K562 (cell line): ENCODE measurements at regions of chr3 and their contacts with region 1.

Region 1: GRCh38 chr3:138068579-138069174 is 46.7 kb downstream of the DZIP1L start:
- DNase-seq: peak; percentile 74 to 82 (median 80)
- ATAC-seq: peak; percentile 98
- H3K4me3 ChIP-seq: no peak overlapping the region
- H3K27ac ChIP-seq: no peak overlapping the region
- H3K4me1 ChIP-seq: no peaks in the 10 kb centered on the region
- H3K27me3 ChIP-seq: peaks cover 0 to 30% of the 10 kb centered on the region in 2 experiments; a peak in 2 of 5 replicates
- CTCF ChIP-seq: peak; percentile 86 to 91 (median 88)
- EP300 ChIP-seq: no peak
- POLR2A ChIP-seq: no peak
- RAD21 ChIP-seq: peak; percentile 93 to 94

Region 2: GRCh38 chr3:137669519-137670060 is 399.1 kb before region 1 on chr3:
- CTCF ChIA-PET with region 1: no interaction called
- POLR2A ChIA-PET with region 1: no interaction called
- in situ Hi-C with region 1: no loop called
- intact Hi-C with region 1: no loop called
- DNase-seq: no peak
- ATAC-seq: no peak
- H3K4me3 ChIP-seq: no peak overlapping the region
- H3K27ac ChIP-seq: no peak overlapping the region
- H3K4me1 ChIP-seq: no peaks in the 10 kb centered on the region
- H3K27me3 ChIP-seq: no peaks in the 10 kb centered on the region
- CTCF ChIP-seq: no peak
- EP300 ChIP-seq: no peak
- POLR2A ChIP-seq: no peak
- RAD21 ChIP-seq: no peak

Region 3: DNA sequence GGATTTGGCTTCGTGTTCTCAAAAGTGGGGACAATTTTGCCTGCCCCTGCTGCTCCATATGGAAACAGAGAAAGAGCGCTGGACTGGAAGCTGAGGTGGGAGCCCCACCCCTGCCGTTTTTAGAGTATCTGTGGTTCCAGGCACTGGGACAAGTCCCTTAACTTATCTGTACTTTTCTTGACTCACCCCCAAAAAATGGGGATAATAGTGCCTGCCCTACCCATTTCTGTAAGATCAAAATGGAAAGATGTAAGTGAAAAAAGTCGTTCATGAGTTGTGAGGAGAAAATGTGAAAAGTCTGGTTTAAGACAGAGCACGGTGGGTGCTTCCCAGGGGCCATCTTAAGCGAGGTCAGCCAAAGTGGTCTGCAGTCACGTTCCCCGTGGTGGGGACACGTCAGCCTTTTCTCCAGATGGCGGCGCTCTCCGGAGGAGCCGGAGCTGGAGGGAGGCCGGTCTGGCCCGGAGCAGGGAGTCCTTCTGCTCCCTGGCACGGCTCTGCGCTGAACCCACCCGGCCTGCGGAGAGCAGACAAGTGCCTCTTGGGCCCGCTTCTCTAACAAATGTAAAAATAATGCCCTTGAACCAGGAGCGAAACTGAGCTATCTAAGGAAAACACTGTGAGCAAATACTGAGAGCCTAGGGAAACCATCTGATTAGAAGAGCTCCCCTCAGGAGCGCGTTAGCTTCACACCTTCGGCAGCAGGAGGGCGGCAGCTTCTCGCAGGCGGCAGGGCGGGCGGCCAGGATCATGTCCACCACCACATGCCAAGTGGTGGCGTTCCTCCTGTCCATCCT is 59.0 kb before region 1 on chr3 and contains the start of gene CLDN18:
- CTCF ChIA-PET with region 1: no interaction called
- POLR2A ChIA-PET with region 1: no interaction called
- in situ Hi-C with region 1: no loop called
- intact Hi-C with region 1: no loop called
- DNase-seq: peak in 1 of 4 experiments; percentile 1
- ATAC-seq: peak; percentile 53; the same call in 2 of the 3 replicates
- H3K4me3 ChIP-seq: no peak within 1 kb of the TSS
- H3K27ac ChIP-seq: no peak within 1 kb of the TSS
- H3K4me1 ChIP-seq: peaks cover 0 to 8% of the 10 kb centered on the region in 2 experiments; a peak in 2 of 5 replicates
- H3K27me3 ChIP-seq: no peaks in the 10 kb centered on the region; a peak in 1 of 5 replicates
- CTCF ChIP-seq: 0 out of 6 replicates have a peak, but pooled peaks of 1 of the 3 experiments have one; percentile 20
- EP300 ChIP-seq: no peak
- POLR2A ChIP-seq: no peak
- RAD21 ChIP-seq: no peak
- polyA plus RNA-seq, gene CLDN18: not detected

Region 4: DNA sequence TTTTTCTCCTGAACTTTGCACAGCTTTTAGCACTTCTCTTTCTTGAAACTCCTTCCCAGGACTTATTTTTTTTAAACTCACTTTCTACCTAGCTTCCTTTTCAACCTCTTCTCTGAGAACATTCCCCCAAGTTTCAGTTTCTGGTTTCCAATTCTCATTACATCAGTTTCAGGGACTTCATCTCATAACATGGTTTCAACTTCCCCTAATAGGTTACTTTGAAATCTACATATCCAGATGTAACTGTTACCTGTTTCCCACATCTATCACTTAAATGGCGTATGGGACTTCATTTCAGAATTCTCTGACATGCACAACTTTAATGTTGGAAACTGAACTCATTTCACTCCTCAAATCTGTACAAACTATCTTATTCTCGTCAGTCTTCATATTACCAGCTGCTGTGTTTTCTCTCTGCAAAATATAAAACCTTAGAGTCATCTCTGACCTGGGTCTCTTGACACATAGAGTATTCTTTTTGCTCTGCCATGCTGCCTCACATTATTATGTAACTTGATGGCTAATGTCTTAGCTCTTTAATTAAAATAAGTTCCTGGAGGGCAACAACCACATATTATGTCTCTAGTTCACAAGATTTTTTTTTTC is 202.6 kb after region 1 on chr3:
- CTCF ChIA-PET with region 1: no interaction called
- POLR2A ChIA-PET with region 1: no interaction called
- in situ Hi-C with region 1: no loop called
- intact Hi-C with region 1: loop called (anchors 10 kb)
- DNase-seq: no peak
- ATAC-seq: no peak
- H3K4me3 ChIP-seq: no peak overlapping the region
- H3K27ac ChIP-seq: no peak overlapping the region
- H3K4me1 ChIP-seq: no peaks in the 10 kb centered on the region
- H3K27me3 ChIP-seq: no peaks in the 10 kb centered on the region
- CTCF ChIP-seq: no peak
- EP300 ChIP-seq: no peak
- POLR2A ChIP-seq: no peak
- RAD21 ChIP-seq: no peak

Region 5: DNA sequence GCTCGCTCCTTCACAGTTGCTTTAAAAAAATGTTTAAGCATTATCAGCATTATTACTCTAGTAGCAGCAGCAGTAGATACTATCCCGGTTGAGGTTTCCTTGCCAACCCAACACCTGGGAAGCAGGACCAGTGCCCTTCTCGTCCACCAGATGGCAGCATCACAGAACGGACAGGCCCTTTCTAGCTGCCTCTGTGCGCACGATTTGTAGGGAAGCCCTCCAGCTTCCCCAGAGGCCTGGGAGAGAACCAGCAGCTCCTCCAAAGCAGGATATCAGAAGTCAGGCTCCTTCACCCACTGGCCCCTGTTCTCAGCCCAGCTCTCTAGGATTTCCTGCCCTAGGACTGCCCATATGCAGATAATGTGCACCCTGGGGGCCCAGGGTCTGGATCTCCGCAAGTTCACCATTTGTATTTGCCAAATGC is 348.9 kb after region 1 on chr3:
- CTCF ChIA-PET with region 1: interaction called, 4 read pairs
- POLR2A ChIA-PET with region 1: no interaction called
- in situ Hi-C with region 1: no loop called
- intact Hi-C with region 1: loop called (anchors 5 kb)
- DNase-seq: peak; percentile 67 to 79 (median 70)
- ATAC-seq: peak; percentile 98
- H3K4me3 ChIP-seq: no peak overlapping the region
- H3K27ac ChIP-seq: no peak overlapping the region
- H3K4me1 ChIP-seq: no peaks in the 10 kb centered on the region; a peak in 1 of 5 replicates
- H3K27me3 ChIP-seq: no peaks in the 10 kb centered on the region
- CTCF ChIP-seq: peak; percentile 87 to 96 (median 88)
- EP300 ChIP-seq: no peak
- POLR2A ChIP-seq: no peak
- RAD21 ChIP-seq: peak; percentile 72 to 88

Region 6: GRCh38 chr3:138712086-138712485 is 643.4 kb after region 1 on chr3:
- CTCF ChIA-PET with region 1: no interaction called
- POLR2A ChIA-PET with region 1: no interaction called
- in situ Hi-C with region 1: no loop called
- intact Hi-C with region 1: no loop called
- DNase-seq: no peak
- ATAC-seq: no peak
- H3K4me3 ChIP-seq: no peak overlapping the region
- H3K27ac ChIP-seq: no peak overlapping the region
- H3K4me1 ChIP-seq: no peaks in the 10 kb centered on the region
- H3K27me3 ChIP-seq: no peaks in the 10 kb centered on the region
- CTCF ChIP-seq: no peak
- EP300 ChIP-seq: no peak
- POLR2A ChIP-seq: no peak
- RAD21 ChIP-seq: no peak

Region 7: GRCh38 chr3:138935848-138936740 is 867.4 kb after region 1 on chr3:
- CTCF ChIA-PET with region 1: no interaction called
- POLR2A ChIA-PET with region 1: no interaction called
- in situ Hi-C with region 1: loop called (anchors 25 kb)
- intact Hi-C with region 1: loop called (anchors 10 kb)
- DNase-seq: peak; percentile 85 to 91 (median 88)
- ATAC-seq: peak; percentile 88
- H3K4me3 ChIP-seq: peak overlapping the region; percentile 45
- H3K27ac ChIP-seq: peak overlapping the region; percentile 54
- H3K4me1 ChIP-seq: peaks cover 4 to 43% of the 10 kb centered on the region in 2 experiments; a peak in 3 of 5 replicates
- H3K27me3 ChIP-seq: no peaks in the 10 kb centered on the region
- CTCF ChIP-seq: peak; percentile 83 to 88 (median 87)
- EP300 ChIP-seq: no peak
- POLR2A ChIP-seq: peak; percentile 58
- RAD21 ChIP-seq: peak; percentile 55 to 68